Ascending aorta (tissue), 2 donors: ENCODE measurements at regions of chr9 and their contacts with region 1.

Region 1: DNA sequence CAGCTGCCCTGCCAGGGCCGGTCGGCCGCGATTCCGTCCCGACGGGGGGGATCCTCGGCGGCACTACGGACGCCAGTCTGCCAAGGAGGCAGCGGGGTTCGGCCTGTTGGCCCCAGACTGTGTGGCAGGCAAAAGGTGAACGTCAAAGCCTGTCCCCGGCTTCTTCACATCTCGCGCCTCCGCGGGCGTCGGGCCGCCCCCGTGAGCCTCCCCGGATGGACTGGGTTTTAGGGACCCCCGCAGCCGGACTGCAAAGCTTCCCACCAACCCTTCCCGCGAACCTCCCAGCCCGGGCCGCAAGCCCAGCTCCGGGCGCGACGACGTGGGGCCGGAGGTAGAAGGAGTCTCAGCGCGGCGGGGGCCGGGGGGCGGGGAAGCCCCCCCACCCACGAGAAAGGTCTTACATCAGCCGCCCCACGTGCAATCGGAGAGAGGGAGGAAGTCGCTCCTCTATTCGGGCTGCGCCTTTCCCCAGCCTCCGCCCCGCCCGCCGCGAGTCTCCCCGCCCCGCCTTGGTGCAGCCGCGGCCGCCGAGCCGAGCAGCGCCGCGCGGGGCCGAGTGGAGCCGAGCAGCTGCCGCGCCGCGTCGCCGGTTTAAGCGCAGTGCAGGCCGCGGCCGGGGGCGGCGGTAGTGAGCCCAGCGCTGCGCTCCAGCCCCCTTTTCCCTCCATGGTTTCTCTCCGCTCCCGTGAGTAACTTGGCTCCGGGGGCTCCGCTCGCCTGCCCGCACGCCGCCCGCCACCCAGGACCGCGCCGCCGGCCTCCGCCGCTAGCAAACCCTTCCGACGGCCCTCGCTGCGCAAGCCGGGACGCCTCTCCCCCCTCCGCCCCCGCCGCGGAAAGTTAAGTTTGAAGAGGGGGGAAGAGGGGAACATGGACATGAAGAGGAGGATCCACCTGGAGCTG is at the start of gene ANP32B:
- DNase-seq: peak; percentile 63 to 95
- H3K4me3 ChIP-seq: peak within 1 kb of the TSS; percentile 86 to 91
- H3K27ac ChIP-seq: peak within 1 kb of the TSS; percentile 97 to 99
- H3K4me1 ChIP-seq: peaks cover 7 to 17% of the 10 kb centered on the region in 2 donors
- H3K27me3 ChIP-seq: no peaks in the 10 kb centered on the region
- CTCF ChIP-seq: peak; percentile 65 to 98 (median 71)
- total RNA-seq, gene ANP32B: 13.9 TPM

Region 2: DNA sequence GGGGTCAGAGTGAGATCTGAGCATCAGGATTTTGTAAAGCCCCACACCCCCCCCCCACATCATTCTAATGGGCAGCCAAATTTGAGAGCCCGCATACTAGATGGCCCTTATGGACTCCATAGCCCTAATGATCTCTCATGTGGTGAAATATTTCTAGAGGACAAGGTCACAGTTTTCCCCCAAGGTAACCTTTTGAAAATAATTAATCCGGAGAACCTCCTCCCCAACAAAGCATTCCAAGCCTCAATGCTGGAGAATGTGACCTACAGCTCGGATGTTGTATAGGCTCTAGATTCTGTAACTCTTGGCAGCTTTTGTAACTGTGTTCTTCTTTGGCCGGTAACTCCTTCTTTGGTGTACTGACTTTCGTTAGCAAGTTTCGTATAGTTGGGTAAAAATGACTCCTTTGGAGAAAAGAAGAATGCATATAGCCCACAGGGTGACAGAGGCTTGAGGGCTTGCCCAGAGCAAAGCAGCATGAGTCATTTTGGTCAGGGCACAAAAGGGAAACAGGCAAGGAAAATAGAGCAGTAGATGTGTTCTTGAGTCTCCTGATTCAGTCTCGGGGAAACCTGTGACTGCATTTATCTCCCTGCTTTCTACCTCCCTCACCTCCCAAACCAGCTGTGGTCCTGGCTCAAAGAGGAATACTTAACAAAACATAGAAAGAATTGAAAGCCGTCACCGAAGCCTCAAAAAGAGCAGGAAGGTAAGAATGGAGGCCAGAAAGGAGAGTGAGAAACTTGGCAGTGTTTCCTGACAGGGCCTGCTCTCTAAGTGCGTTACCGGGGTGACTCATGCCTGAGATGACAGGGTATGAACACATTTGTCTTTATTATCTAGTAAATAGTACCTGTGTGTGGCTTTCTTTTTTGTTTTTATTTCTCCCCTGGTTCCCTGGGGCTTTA is 279.2 kb before region 1 on chr9:
- intact Hi-C with region 1: loop called (anchors 5 kb)
- DNase-seq: peak in 1 of 2 donors; percentile 80
- H3K4me3 ChIP-seq: no peak overlapping the region
- H3K27ac ChIP-seq: peak overlapping the region; percentile 82
- H3K4me1 ChIP-seq: peaks cover 0 to 17% of the 10 kb centered on the region in 2 donors
- H3K27me3 ChIP-seq: no peaks in the 10 kb centered on the region
- CTCF ChIP-seq: no peak

Region 3: GRCh38 chr9:98034593-98035546 is 51.9 kb after region 1 on chr9:
- intact Hi-C with region 1: loop called (anchors 2 kb)
- DNase-seq: peak; percentile 44 to 93
- H3K4me3 ChIP-seq: peak overlapping the region in 1 of 2 donors; percentile 30
- H3K27ac ChIP-seq: peak overlapping the region; percentile 52 to 74
- H3K4me1 ChIP-seq: peaks cover 0 to 10% of the 10 kb centered on the region in 2 donors
- H3K27me3 ChIP-seq: no peaks in the 10 kb centered on the region
- CTCF ChIP-seq: peak; percentile 72 to 83 (median 81)